ENCODE measurements at regions of chr2 and their contacts with region 1.

Region 1: GRCh38 chr2:85750587-85751575 is 2.9 kb upstream of the ATOH8 start:
- DNase-seq: peak; percentile 76 to 87 (median 81)
- H3K4me3 ChIP-seq: no peak overlapping the region
- H3K27ac ChIP-seq: no peak overlapping the region
- H3K4me1 ChIP-seq: peaks cover 0 to 30% (median 26%) of the 10 kb centered on the region in 4 experiments
- H3K27me3 ChIP-seq: peaks cover 0 to 71% (median 32%) of the 10 kb centered on the region in 5 experiments

Region 2: DNA sequence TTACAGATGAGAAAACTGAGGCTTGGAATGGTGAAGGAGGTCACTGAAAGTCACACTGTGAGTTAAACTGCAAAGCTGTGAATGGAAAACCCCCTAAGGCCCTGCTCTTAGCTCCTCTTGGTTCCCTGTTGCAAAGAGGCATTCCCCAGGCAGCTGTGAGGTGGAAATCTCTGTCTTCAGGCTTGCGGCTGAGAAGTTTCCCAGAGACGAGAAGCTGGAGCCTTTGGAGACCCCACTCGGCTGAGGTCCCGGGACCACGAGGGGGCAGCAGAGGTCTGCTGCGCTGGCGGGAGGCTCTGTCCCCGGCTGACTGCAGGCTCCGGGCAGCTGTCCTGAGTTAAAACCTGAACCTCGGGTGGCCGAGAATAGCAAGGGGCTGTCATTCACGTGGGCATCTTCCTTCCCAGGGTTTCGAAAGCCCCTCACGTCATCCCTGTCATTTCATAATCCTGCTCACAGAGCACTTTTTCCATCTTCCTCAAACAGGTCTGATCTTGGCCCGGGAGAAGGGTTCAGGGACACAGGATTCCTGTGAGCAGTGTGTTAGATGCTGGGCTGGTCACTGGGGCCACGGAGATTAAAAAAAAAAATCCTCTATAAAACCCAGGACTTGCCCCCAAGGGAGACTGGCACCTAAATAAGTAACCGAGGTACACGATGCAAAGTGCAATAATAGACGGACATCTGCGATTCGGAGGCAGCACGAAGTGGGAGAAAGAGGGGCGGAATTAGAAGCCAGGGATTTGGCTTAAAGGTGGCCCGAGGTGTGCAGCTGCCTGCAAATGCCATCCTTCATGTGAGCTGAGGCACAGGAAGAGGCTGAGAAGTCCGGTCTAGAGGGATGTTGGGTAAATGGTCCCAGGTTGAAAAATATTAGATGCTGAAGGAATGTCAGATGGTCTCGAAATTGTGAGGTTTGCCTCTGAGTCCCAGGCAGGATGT is 21.7 kb before region 1 on chr2:
- CTCF ChIA-PET with region 1: interaction called, 35 read pairs
- POLR2A ChIA-PET with region 1: no interaction called
- DNase-seq: peak; percentile 59 to 77 (median 73)
- H3K4me3 ChIP-seq: no peak overlapping the region
- H3K27ac ChIP-seq: no peak overlapping the region
- H3K4me1 ChIP-seq: peaks cover 0 to 10% (median 4%) of the 10 kb centered on the region in 4 experiments
- H3K27me3 ChIP-seq: peaks cover 0 to 5% (median 2%) of the 10 kb centered on the region in 5 experiments

Region 3: GRCh38 chr2:85765081-85765731 is 14.3 kb after region 1 on chr2:
- CTCF ChIA-PET with region 1: interaction called, 86 read pairs
- POLR2A ChIA-PET with region 1: no interaction called
- DNase-seq: peak in 2 of 3 donors; percentile 67 to 76
- H3K4me3 ChIP-seq: peak overlapping the region in 3 of 7 experiments; percentile 9 to 34 (median 28)
- H3K27ac ChIP-seq: no peak overlapping the region
- H3K4me1 ChIP-seq: peaks cover 0 to 19% (median 13%) of the 10 kb centered on the region in 4 experiments
- H3K27me3 ChIP-seq: peaks cover 0 to 23% (median 12%) of the 10 kb centered on the region in 5 experiments

Region 4: GRCh38 chr2:85772019-85772745 is 21.3 kb after region 1 on chr2:
- CTCF ChIA-PET with region 1: interaction called, 86 read pairs
- POLR2A ChIA-PET with region 1: interaction called, 3 read pairs
- DNase-seq: peak; percentile 70 to 84 (median 79)
- H3K4me3 ChIP-seq: peak overlapping the region in 2 of 7 experiments; percentile 40 to 45
- H3K27ac ChIP-seq: no peak overlapping the region
- H3K4me1 ChIP-seq: peaks cover 0 to 16% (median 9%) of the 10 kb centered on the region in 4 experiments
- H3K27me3 ChIP-seq: peaks cover 0 to 9% (median 1%) of the 10 kb centered on the region in 5 experiments

Region 5: GRCh38 chr2:85785027-85785822 is 34.3 kb after region 1 on chr2:
- CTCF ChIA-PET with region 1: interaction called, 32 read pairs
- POLR2A ChIA-PET with region 1: no interaction called
- DNase-seq: peak; percentile 82 to 95 (median 94)
- H3K4me3 ChIP-seq: peak overlapping the region in 3 of 7 experiments; percentile 19 to 58 (median 48)
- H3K27ac ChIP-seq: no peak overlapping the region
- H3K4me1 ChIP-seq: peaks cover 0 to 29% (median 25%) of the 10 kb centered on the region in 4 experiments
- H3K27me3 ChIP-seq: peaks cover 0 to 4% (median 0%) of the 10 kb centered on the region in 5 experiments

Region 6: GRCh38 chr2:85804583-85804982 is 53.7 kb after region 1 on chr2:
- CTCF ChIA-PET with region 1: interaction called, 218 read pairs
- POLR2A ChIA-PET with region 1: no interaction called
- DNase-seq: peak; percentile 34 to 76 (median 76)
- H3K4me3 ChIP-seq: no peak overlapping the region
- H3K27ac ChIP-seq: no peak overlapping the region
- H3K4me1 ChIP-seq: peaks cover 0 to 9% (median 6%) of the 10 kb centered on the region in 4 experiments
- H3K27me3 ChIP-seq: no peaks in the 10 kb centered on the region

Measured in common myeloid progenitor, CD34-positive (primary cell).